ENCODE measurements at regions of chr10 and their contacts with region 1.

Region 1: GRCh38 chr10:86267286-86268195 is 99.1 kb downstream of the GRID1 start:
- DNase-seq: no peak
- ATAC-seq: peak; percentile 18; the same call in 1 of the 2 replicates
- H3K4me3 Mint-ChIP-seq: no peak overlapping the region
- H3K27ac Mint-ChIP-seq: no peak overlapping the region
- H3K4me1 Mint-ChIP-seq: peaks cover 10% of the 10 kb centered on the region
- H3K27me3 Mint-ChIP-seq: peaks cover 4% of the 10 kb centered on the region; the same call in 1 of the 2 replicates
- CTCF ChIP-seq: no peak

Region 2: DNA sequence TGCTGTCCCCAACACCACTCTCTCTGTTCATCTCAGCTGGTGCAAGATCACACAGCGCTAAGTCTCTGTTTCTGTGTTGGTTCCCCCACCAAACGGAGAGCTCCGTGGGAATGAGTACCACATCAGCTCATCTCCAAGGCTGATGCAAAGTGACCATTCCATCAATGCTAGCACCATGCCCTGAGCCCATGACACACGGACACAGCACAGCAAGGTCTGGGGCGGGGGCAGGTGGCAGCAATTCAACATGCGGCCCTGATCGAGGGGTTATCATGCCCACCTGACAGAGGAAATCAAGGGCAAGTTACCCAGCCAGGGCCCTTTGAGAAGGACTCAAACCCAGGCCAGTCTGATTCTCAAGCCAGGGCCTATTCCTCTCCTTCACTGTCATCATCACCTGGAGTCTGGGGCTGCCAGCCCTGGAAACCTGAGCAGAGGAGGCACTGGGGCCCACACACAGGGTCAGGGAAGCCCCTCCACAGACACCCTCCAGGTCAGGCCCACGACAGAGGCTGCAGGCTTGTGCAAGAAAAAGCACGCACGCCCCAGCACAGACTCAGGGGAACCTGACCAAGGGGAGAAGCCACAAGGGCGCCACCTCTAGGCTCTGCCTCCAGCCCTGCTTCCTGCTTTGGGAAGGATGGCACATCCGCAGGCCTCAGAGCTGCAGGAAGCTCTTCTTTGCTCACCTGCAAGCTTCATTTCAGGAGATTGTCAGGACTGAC is 24.2 kb after region 1 on chr10:
- CTCF ChIA-PET with region 1: interaction called, 28 read pairs
- POLR2A ChIA-PET with region 1: no interaction called
- DNase-seq: peak; percentile 57
- ATAC-seq: peak; percentile 82
- H3K4me3 Mint-ChIP-seq: no peak overlapping the region
- H3K27ac Mint-ChIP-seq: no peak overlapping the region
- H3K4me1 Mint-ChIP-seq: peaks cover 25% of the 10 kb centered on the region
- H3K27me3 Mint-ChIP-seq: peaks cover 3% of the 10 kb centered on the region; the same call in 1 of the 2 replicates
- CTCF ChIP-seq: no peak